ENCODE measurements at regions of chr16 and their contacts with region 1.

Region 1: DNA sequence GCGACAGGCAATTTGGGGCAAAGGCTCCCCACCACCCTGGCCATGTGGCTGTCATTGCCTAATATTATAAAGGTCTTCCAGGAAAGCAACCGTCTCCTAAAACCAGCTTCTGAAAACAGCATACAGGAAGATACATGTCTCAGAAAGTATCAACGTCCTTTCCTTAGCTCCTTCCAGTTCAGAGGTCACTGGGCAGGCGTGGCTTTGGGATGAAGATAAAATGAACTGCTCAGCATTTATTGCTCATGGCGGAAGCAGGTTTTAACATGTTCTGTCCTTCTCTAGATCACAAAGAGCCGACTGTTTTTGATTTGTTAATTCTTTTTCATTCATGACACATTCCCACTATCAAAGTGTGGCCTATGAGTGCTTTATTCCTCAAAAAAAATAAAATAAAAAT is 8.0 kb downstream of the CFAP20 start:
- DNase-seq: no peak
- H3K4me3 ChIP-seq: no peak overlapping the region
- H3K27ac ChIP-seq: no peak overlapping the region
- H3K4me1 ChIP-seq: peaks cover 0 to 8% (median 1%) of the 10 kb centered on the region in 4 experiments; a peak in 3 of 7 replicates
- H3K27me3 ChIP-seq: no peaks in the 10 kb centered on the region
- CTCF ChIP-seq: no peak
- EP300 ChIP-seq: no peak
- POLR2A ChIP-seq: no peak
- RAD21 ChIP-seq: no peak

Region 2: GRCh38 chr16:57858635-57859034 is 262.5 kb before region 1 on chr16:
- CTCF ChIA-PET with region 1: no interaction called
- POLR2A ChIA-PET with region 1: no interaction called
- DNase-seq: no peak
- H3K4me3 ChIP-seq: no peak overlapping the region
- H3K27ac ChIP-seq: no peak overlapping the region
- H3K4me1 ChIP-seq: peaks cover 5 to 11% (median 8%) of the 10 kb centered on the region in 4 experiments
- H3K27me3 ChIP-seq: no peaks in the 10 kb centered on the region
- CTCF ChIP-seq: no peak
- EP300 ChIP-seq: no peak
- POLR2A ChIP-seq: no peak
- RAD21 ChIP-seq: no peak

Region 3: DNA sequence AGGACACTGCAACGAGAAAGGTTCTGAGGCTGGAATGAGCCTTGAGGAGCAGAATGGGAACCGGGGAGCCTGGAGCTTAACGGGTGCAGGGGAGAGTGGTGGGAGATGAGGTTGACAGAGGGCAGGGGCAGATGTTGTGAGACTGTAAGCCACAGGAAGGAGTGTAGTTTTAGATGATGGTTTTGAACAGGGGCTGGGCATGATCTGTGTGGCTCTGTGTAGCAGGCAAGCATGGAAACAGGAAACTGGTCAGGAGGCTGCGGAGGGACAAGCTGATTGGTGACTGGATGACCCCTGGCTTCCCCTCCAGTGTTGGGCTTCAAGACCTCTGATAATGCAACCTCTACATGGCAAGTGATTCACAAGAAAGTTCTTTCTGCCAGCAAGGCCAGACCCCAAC is 148.8 kb before region 1 on chr16:
- CTCF ChIA-PET with region 1: no interaction called
- POLR2A ChIA-PET with region 1: no interaction called
- DNase-seq: no peak
- H3K4me3 ChIP-seq: no peak overlapping the region
- H3K27ac ChIP-seq: no peak overlapping the region
- H3K4me1 ChIP-seq: no peaks in the 10 kb centered on the region; a peak in 1 of 7 replicates
- H3K27me3 ChIP-seq: no peaks in the 10 kb centered on the region
- CTCF ChIP-seq: no peak
- EP300 ChIP-seq: no peak
- POLR2A ChIP-seq: no peak
- RAD21 ChIP-seq: no peak

Region 4: GRCh38 chr16:58011652-58012051 is 109.5 kb before region 1 on chr16:
- CTCF ChIA-PET with region 1: interaction called, 52 read pairs
- POLR2A ChIA-PET with region 1: no interaction called
- DNase-seq: no peak
- H3K4me3 ChIP-seq: no peak overlapping the region
- H3K27ac ChIP-seq: no peak overlapping the region
- H3K4me1 ChIP-seq: peaks cover 0 to 4% (median 1%) of the 10 kb centered on the region in 4 experiments; a peak in 3 of 7 replicates
- H3K27me3 ChIP-seq: no peaks in the 10 kb centered on the region
- CTCF ChIP-seq: no peak
- EP300 ChIP-seq: no peak
- POLR2A ChIP-seq: no peak
- RAD21 ChIP-seq: no peak

Region 5: DNA sequence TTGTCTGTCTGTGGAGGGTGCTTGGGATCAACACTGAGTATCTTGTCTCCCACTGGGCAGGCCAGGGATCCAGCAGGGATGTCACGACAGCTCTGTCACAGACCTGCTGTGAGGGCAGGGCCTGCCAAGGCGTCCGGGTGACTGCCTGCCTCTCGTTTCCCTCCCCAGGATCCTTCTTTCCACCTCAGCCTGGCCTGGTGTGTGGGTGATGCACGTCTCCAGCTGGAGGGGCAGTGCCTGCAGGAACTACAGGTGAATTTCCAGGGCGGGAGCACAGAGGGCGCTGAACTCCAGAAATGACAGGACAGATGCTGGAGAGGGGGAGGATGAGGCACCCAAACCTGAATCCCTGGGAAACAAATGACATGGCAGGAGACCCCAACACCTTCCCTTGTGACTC is 102.3 kb before region 1 on chr16:
- CTCF ChIA-PET with region 1: interaction called, 362 read pairs
- POLR2A ChIA-PET with region 1: interaction called, 3 read pairs
- DNase-seq: peak in 1 of 2 experiments; percentile 69
- H3K4me3 ChIP-seq: no peak overlapping the region
- H3K27ac ChIP-seq: no peak overlapping the region
- H3K4me1 ChIP-seq: peaks cover 0 to 12% (median 7%) of the 10 kb centered on the region in 4 experiments; a peak in 5 of 7 replicates
- H3K27me3 ChIP-seq: no peaks in the 10 kb centered on the region; a peak in 2 of 7 replicates
- CTCF ChIP-seq: peak; percentile 54 to 76 (median 74)
- EP300 ChIP-seq: no peak
- POLR2A ChIP-seq: no peak
- RAD21 ChIP-seq: peak; percentile 52 to 64; a peak in 3 of 4 replicates

Region 6: GRCh38 chr16:58025351-58026138 is 95.6 kb before region 1 on chr16 and contains the start of gene MMP15:
- CTCF ChIA-PET with region 1: interaction called, 362 read pairs
- POLR2A ChIA-PET with region 1: interaction called, 15 read pairs
- DNase-seq: peak; percentile 97 to 98
- H3K4me3 ChIP-seq: peak within 1 kb of the TSS; percentile 73 to 90 (median 82)
- H3K27ac ChIP-seq: no peak within 1 kb of the TSS
- H3K4me1 ChIP-seq: peaks cover 0 to 31% (median 20%) of the 10 kb centered on the region in 4 experiments; a peak in 6 of 7 replicates
- H3K27me3 ChIP-seq: no peaks in the 10 kb centered on the region; a peak in 3 of 7 replicates
- CTCF ChIP-seq: no peak
- EP300 ChIP-seq: no peak
- POLR2A ChIP-seq: no peak; a peak in 1 of 3 replicates
- RAD21 ChIP-seq: peak in 1 of 2 experiments; percentile 5; a peak in 1 of 4 replicates
- total RNA-seq, gene MMP15: 42.2 and 44.0 TPM in 2 replicates

Region 7: DNA sequence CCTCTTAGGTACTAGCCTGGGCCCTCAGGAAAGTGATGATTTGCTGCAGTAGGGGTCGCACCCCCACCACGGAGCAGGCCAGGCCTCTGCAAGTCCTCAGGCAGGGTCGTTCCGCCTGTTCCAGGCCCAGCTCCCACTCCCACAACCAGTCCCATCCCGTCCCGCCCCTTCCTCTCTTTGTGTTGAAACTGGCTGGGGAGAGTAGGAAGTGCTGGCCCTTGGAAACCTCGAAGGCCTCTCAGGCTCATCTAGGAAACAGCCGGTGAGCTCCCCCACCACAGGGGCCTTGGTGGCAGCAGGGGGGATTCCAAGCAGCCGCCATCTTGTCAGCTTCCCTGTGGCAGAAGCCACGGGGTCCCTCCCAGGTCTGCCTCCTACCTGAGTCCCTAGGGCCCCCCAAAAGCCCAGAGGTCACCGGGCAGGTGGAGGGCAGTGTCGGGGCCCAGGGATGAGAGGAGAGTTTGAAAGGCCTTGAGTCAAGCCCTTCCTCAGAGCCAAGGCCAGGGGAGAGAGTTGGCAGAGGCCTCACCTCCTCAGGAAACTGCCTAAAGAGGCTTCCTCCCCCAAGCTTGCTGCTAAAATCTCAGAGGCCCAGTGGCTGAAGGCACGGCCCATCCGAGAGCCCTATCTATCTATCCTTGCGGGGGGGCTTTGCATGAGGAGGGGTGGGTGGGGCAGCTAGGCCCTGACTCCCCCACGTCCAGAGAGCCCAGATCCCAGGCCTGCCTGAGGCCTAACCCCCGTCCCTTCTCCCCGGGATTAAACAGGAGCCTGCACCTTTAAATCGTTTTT is 73.4 kb before region 1 on chr16:
- CTCF ChIA-PET with region 1: interaction called, 36 read pairs
- POLR2A ChIA-PET with region 1: no interaction called
- DNase-seq: no peak
- H3K4me3 ChIP-seq: no peak overlapping the region
- H3K27ac ChIP-seq: no peak overlapping the region
- H3K4me1 ChIP-seq: peaks cover 0 to 15% (median 8%) of the 10 kb centered on the region in 4 experiments; a peak in 4 of 7 replicates
- H3K27me3 ChIP-seq: no peaks in the 10 kb centered on the region
- CTCF ChIP-seq: peak in 2 of 3 experiments; percentile 10 to 15; a peak in 1 of 4 replicates
- EP300 ChIP-seq: no peak
- POLR2A ChIP-seq: no peak
- RAD21 ChIP-seq: peak; percentile 50 to 51

Region 8: GRCh38 chr16:58088091-58088490 is 33.0 kb before region 1 on chr16:
- CTCF ChIA-PET with region 1: interaction called, 235 read pairs
- POLR2A ChIA-PET with region 1: no interaction called
- DNase-seq: no peak
- H3K4me3 ChIP-seq: no peak overlapping the region
- H3K27ac ChIP-seq: no peak overlapping the region
- H3K4me1 ChIP-seq: peaks cover 0 to 10% (median 4%) of the 10 kb centered on the region in 4 experiments; a peak in 3 of 7 replicates
- H3K27me3 ChIP-seq: no peaks in the 10 kb centered on the region
- CTCF ChIP-seq: no peak
- EP300 ChIP-seq: no peak
- POLR2A ChIP-seq: no peak
- RAD21 ChIP-seq: no peak

Region 9: GRCh38 chr16:58110571-58111301 is 10.4 kb before region 1 on chr16:
- CTCF ChIA-PET with region 1: interaction called, 235 read pairs
- POLR2A ChIA-PET with region 1: interaction called, 27 read pairs
- DNase-seq: no peak
- H3K4me3 ChIP-seq: no peak overlapping the region
- H3K27ac ChIP-seq: no peak overlapping the region
- H3K4me1 ChIP-seq: peaks cover 9 to 24% (median 21%) of the 10 kb centered on the region in 4 experiments
- H3K27me3 ChIP-seq: no peaks in the 10 kb centered on the region
- CTCF ChIP-seq: no peak
- EP300 ChIP-seq: no peak
- POLR2A ChIP-seq: no peak
- RAD21 ChIP-seq: peak in 1 of 2 experiments; percentile 27; a peak in 1 of 4 replicates

Measured in H1 (cell line).